ENCODE measurements at regions of chr15 and their contacts with region 1.

Region 1: GRCh38 chr15:63752075-63752684 is 81.6 kb downstream of the HERC1 start:
- DNase-seq: peak; percentile 76
- ATAC-seq: peak; percentile 76
- H3K4me3 ChIP-seq: no peak overlapping the region
- H3K4me3 Mint-ChIP-seq: no peak overlapping the region
- H3K27ac ChIP-seq: peak overlapping the region in 1 of 2 donors; percentile 75
- H3K27ac Mint-ChIP-seq: peak overlapping the region; percentile 38
- H3K4me1 ChIP-seq: peaks cover 0 to 4% of the 10 kb centered on the region in 2 donors
- H3K4me1 Mint-ChIP-seq: peaks cover 7% of the 10 kb centered on the region
- H3K27me3 ChIP-seq: no peaks in the 10 kb centered on the region
- H3K27me3 Mint-ChIP-seq: no peaks in the 10 kb centered on the region
- CTCF ChIP-seq: peak; percentile 89

Region 2: GRCh38 chr15:63348392-63348791 is 403.8 kb before region 1 on chr15:
- CTCF ChIA-PET with region 1: no interaction called
- POLR2A ChIA-PET with region 1: no interaction called
- intact Hi-C with region 1: no loop called
- DNase-seq: peak; percentile 19
- ATAC-seq: no peak
- H3K4me3 ChIP-seq: no peak overlapping the region
- H3K4me3 Mint-ChIP-seq: peak overlapping the region; percentile 1
- H3K27ac ChIP-seq: no peak overlapping the region
- H3K27ac Mint-ChIP-seq: peak overlapping the region; percentile 32
- H3K4me1 ChIP-seq: peaks cover 0 to 16% of the 10 kb centered on the region in 2 donors
- H3K4me1 Mint-ChIP-seq: peaks cover 21% of the 10 kb centered on the region
- H3K27me3 ChIP-seq: no peaks in the 10 kb centered on the region
- H3K27me3 Mint-ChIP-seq: no peaks in the 10 kb centered on the region
- CTCF ChIP-seq: no peak

Region 3: GRCh38 chr15:63763476-63764123 is 11.4 kb after region 1 on chr15:
- CTCF ChIA-PET with region 1: interaction called, 20 read pairs
- POLR2A ChIA-PET with region 1: no interaction called
- intact Hi-C with region 1: no loop called
- DNase-seq: no peak
- ATAC-seq: no peak
- H3K4me3 ChIP-seq: no peak overlapping the region
- H3K4me3 Mint-ChIP-seq: no peak overlapping the region
- H3K27ac ChIP-seq: no peak overlapping the region
- H3K27ac Mint-ChIP-seq: no peak overlapping the region
- H3K4me1 ChIP-seq: peaks cover 0 to 6% of the 10 kb centered on the region in 2 donors
- H3K4me1 Mint-ChIP-seq: peaks cover 30% of the 10 kb centered on the region
- H3K27me3 ChIP-seq: no peaks in the 10 kb centered on the region
- H3K27me3 Mint-ChIP-seq: no peaks in the 10 kb centered on the region
- CTCF ChIP-seq: no peak

Region 4: GRCh38 chr15:63833021-63833696 is 81.0 kb after region 1 on chr15:
- CTCF ChIA-PET with region 1: interaction called, 20 read pairs
- POLR2A ChIA-PET with region 1: no interaction called
- intact Hi-C with region 1: loop called (anchors 5 kb)
- DNase-seq: no peak
- ATAC-seq: peak; percentile 39
- H3K4me3 ChIP-seq: peak overlapping the region; percentile 83 to 95 (median 93)
- H3K4me3 Mint-ChIP-seq: peak overlapping the region; percentile 91
- H3K27ac ChIP-seq: peak overlapping the region; percentile 90
- H3K27ac Mint-ChIP-seq: peak overlapping the region; percentile 87
- H3K4me1 ChIP-seq: peaks cover 22 to 27% of the 10 kb centered on the region in 2 donors
- H3K4me1 Mint-ChIP-seq: peaks cover 39% of the 10 kb centered on the region
- H3K27me3 ChIP-seq: no peaks in the 10 kb centered on the region
- H3K27me3 Mint-ChIP-seq: no peaks in the 10 kb centered on the region
- CTCF ChIP-seq: no peak

Region 5: GRCh38 chr15:63891079-63891767 is 139.0 kb after region 1 on chr15:
- CTCF ChIA-PET with region 1: interaction called, 149 read pairs
- POLR2A ChIA-PET with region 1: no interaction called
- intact Hi-C with region 1: loop called (anchors 1 kb)
- DNase-seq: peak; percentile 84
- ATAC-seq: peak; percentile 67
- H3K4me3 ChIP-seq: no peak overlapping the region
- H3K4me3 Mint-ChIP-seq: no peak overlapping the region
- H3K27ac ChIP-seq: no peak overlapping the region
- H3K27ac Mint-ChIP-seq: peak overlapping the region; percentile 37
- H3K4me1 ChIP-seq: peaks cover 30 to 35% of the 10 kb centered on the region in 2 donors
- H3K4me1 Mint-ChIP-seq: peaks cover 37% of the 10 kb centered on the region
- H3K27me3 ChIP-seq: no peaks in the 10 kb centered on the region
- H3K27me3 Mint-ChIP-seq: no peaks in the 10 kb centered on the region
- CTCF ChIP-seq: peak; percentile 95

Region 6: DNA sequence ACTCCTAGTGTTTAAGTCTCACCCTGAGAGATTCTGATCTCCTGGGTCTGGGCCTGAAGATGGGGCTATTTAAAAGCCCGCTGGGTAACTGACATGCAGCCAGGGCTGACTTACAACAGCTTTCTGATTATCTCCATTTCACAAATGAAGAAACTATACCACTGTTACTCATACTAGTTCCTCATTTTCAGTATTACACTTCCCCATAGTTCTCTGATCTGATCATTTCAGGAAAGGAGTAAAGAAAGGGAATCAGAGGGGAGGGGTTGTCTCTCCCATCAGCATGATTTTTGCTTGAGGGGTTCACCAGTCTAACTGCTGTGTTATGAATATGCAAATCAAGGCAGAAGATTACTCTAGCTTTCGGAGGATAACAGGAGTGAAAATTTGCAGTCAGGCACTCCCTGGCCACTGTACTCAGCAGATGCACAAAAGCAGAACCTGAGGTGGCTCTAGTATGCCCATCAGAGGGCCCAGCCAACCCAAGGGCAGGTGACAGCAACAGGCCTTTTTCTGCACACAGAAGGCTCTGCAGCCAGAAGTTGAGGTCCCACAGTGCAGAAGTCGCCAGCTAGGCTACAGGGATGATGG is 234.7 kb after region 1 on chr15:
- CTCF ChIA-PET with region 1: interaction called, 16 read pairs
- POLR2A ChIA-PET with region 1: interaction called, 4 read pairs
- intact Hi-C with region 1: no loop called
- DNase-seq: peak; percentile 79
- ATAC-seq: peak; percentile 90
- H3K4me3 ChIP-seq: no peak overlapping the region
- H3K4me3 Mint-ChIP-seq: peak overlapping the region; percentile 70
- H3K27ac ChIP-seq: peak overlapping the region; percentile 57 to 63
- H3K27ac Mint-ChIP-seq: peak overlapping the region; percentile 96
- H3K4me1 ChIP-seq: peaks cover 46 to 56% of the 10 kb centered on the region in 2 donors
- H3K4me1 Mint-ChIP-seq: peaks cover 62% of the 10 kb centered on the region
- H3K27me3 ChIP-seq: no peaks in the 10 kb centered on the region
- H3K27me3 Mint-ChIP-seq: no peaks in the 10 kb centered on the region
- CTCF ChIP-seq: no peak

Region 7: DNA sequence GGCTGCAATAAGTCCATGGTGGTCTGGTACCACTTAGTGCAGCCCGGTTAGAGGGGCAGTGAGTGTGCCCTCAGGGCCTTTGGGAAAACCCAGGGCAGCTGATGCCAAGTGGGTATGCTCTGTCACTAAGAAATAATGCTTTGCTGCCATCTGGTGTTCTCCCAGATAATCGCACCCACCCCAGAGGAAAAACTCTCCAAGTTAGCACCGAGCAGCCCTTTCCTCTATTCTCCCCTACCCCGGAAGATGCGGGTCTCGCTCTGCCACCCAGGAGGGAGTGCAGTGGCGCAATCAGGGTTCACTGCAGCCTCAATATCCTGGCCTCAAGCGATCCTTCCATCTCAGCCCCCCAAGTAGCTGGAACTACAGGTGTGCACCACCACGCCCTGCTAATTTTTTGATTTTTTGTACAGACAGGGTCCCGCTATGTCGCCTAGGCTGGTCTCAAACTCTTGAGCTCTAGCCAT is 315.4 kb after region 1 on chr15:
- CTCF ChIA-PET with region 1: interaction called, 307 read pairs
- POLR2A ChIA-PET with region 1: no interaction called
- intact Hi-C with region 1: loop called (anchors 1 kb)
- DNase-seq: peak; percentile 84
- ATAC-seq: peak; percentile 91
- H3K4me3 ChIP-seq: no peak overlapping the region
- H3K4me3 Mint-ChIP-seq: no peak overlapping the region
- H3K27ac ChIP-seq: no peak overlapping the region
- H3K27ac Mint-ChIP-seq: peak overlapping the region; percentile 39
- H3K4me1 ChIP-seq: peaks cover 24 to 27% of the 10 kb centered on the region in 2 donors
- H3K4me1 Mint-ChIP-seq: peaks cover 26% of the 10 kb centered on the region
- H3K27me3 ChIP-seq: no peaks in the 10 kb centered on the region
- H3K27me3 Mint-ChIP-seq: no peaks in the 10 kb centered on the region
- CTCF ChIP-seq: peak; percentile 89

Region 8: DNA sequence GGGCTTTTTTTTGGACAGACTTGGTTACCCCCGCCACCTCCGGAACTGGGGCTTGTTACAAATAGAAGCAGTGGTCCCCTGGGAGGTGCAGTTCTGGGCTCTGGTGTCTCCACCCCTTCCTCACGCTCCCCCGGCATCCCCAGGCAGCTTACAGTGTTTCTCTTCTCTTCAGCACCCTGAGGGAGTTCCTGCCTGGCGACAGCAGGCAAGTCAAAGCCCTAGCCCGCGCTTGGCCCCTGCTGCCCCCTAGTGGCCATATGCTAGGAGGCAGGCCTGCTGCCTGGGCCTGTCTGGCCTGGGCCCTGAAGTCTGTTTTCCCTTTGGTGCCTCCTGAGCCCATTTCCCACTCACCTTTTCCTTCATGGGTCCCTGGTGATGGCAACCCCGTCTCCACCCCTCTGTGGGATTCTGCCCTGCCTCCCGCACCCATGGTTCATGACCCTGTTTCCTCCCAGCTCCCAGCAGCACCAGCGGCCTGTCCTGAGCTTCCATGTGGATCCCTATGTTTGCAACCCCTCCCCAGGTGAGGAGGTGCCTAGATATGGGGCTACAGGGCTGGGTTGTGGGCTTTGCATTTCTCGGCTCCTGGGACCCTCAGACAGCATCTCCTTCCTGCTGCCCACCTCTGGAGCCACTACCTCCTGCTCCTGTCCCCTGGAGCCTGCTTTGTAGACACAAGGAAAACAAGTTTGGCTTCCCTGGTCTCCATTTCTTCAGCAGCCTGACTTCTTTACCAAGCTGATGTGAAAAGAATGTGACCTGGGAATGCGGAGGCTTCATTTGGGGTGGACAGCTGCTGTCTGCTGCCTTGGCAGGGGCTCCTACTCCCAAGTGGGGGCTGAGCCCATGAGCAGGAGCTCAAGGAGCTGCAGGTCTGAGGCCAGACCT is 401.5 kb after region 1 on chr15:
- CTCF ChIA-PET with region 1: interaction called, 17 read pairs
- POLR2A ChIA-PET with region 1: no interaction called
- intact Hi-C with region 1: loop called (anchors 2 kb)
- DNase-seq: peak; percentile 97
- ATAC-seq: peak; percentile 82
- H3K4me3 ChIP-seq: peak overlapping the region in 4 of 5 experiments; percentile 91 to 96 (median 94)
- H3K4me3 Mint-ChIP-seq: peak overlapping the region; percentile 90
- H3K27ac ChIP-seq: peak overlapping the region; percentile 79 to 83
- H3K27ac Mint-ChIP-seq: peak overlapping the region; percentile 94
- H3K4me1 ChIP-seq: peaks cover 34 to 67% of the 10 kb centered on the region in 2 donors
- H3K4me1 Mint-ChIP-seq: peaks cover 76% of the 10 kb centered on the region
- H3K27me3 ChIP-seq: no peaks in the 10 kb centered on the region
- H3K27me3 Mint-ChIP-seq: no peaks in the 10 kb centered on the region
- CTCF ChIP-seq: peak; percentile 92

Measured in B cell (primary cell).